ENCODE measurements at regions of chr3 and their contacts with region 1.

Region 1: GRCh38 chr3:123028233-123028828 is 768 bp upstream of the SEMA5B start:
- DNase-seq: peak; percentile 27
- H3K4me3 ChIP-seq: peak overlapping the region; percentile 52
- H3K27ac ChIP-seq: no peak overlapping the region
- H3K4me1 ChIP-seq: peaks cover 10% of the 10 kb centered on the region
- H3K27me3 ChIP-seq: peaks cover 42% of the 10 kb centered on the region
- CTCF ChIP-seq: peak; percentile 29

Region 2: DNA sequence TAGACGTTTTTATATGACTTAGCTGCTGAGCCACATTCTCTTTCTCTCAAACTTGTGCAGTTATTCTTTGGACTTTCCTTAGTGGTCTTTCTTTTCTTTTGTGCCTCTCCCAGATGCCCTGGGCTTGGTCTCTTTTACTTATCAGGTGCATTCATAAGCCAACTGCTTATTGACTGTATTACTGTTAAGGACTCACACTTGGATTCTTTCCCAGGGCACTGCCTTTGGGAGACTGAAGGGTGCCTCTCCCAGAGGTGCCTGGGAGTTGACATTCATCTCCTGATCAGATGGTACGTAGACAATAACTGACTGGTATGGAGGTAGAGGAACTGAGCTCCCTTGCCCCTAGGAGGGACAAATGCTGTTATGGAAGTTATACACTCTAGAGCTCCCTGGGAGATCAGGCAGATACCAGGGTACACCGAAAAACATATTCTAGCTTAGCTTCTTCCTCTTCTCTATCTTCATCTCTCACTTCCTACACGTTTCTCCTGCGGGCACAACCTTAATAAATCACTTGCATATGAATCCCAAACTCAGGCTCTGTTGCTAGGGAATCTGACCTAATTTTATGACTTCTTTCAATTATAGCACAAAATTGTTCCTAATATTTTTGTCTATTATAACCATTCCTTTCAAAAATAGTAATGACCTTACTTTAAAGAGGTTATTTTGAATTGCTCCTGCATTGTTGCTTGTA is 426.2 kb before region 1 on chr3:
- intact Hi-C with region 1: no loop called
- DNase-seq: no peak
- H3K4me3 ChIP-seq: no peak overlapping the region
- H3K27ac ChIP-seq: no peak overlapping the region
- H3K4me1 ChIP-seq: no peaks in the 10 kb centered on the region
- H3K27me3 ChIP-seq: no peaks in the 10 kb centered on the region
- CTCF ChIP-seq: no peak

Region 3: DNA sequence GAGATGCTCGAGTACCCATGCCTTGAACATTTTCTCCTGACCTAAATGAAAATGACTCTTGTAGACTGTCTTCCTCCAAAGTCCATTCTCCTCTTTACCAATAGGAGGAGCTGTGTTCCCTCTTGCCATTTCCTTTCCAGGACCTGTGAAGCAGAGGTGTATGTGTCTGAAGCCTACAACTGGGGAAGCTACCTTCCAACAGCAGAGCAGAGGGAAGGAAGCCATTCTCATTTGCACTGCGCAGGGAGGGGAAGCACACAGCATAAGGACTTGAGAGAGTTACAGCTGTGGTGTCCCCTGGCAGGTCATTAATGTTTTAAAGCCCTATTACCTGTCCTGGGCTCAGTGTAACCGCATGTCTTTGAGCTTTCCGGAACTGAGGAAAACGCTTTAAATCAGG is 273.4 kb before region 1 on chr3:
- intact Hi-C with region 1: loop called (anchors 10 kb)
- DNase-seq: peak; percentile 21
- H3K4me3 ChIP-seq: no peak overlapping the region
- H3K27ac ChIP-seq: no peak overlapping the region
- H3K4me1 ChIP-seq: no peaks in the 10 kb centered on the region
- H3K27me3 ChIP-seq: no peaks in the 10 kb centered on the region
- CTCF ChIP-seq: peak; percentile 77

Region 4: DNA sequence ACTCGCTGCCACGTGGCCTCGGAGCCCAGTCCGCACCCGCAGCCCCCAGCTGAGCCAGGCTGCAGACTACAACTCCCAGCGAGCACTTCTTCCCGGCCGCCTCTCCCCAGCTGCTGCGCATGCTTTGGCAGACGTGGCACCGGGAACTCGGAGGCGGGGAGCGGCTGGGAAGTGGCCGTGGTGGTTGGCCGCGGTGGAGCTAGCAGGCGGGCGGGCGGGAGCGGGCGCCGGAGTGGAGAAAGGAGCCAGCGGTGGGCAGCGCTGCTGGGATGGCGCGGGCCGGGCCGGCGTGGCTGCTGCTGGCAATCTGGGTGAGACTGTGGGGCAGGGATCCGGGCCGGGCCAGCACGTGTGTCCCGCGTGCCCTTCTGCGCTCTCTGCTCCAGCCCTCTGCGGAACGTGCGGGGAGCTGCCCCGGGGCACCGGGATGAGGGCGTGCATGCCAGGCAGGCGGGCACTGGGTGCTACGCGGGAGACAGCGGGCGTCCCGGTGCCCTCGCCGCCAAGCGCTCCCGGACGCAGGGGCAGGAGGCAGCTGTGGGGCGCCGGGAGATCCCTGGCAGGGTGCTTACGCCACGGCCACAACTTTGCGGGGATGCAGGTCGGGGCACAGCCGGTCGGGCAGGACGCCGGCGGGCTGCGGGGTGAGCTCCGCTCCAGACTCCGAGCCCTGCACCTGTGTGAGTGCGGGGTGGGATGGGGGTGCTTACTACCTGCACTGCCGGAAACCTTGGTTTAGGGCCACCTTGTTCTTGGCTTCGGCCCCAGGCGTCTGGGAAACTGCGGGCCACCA is 38.8 kb after region 1 on chr3 and contains the start of gene PDIA5:
- intact Hi-C with region 1: no loop called
- DNase-seq: peak; percentile 93
- H3K4me3 ChIP-seq: peak within 1 kb of the TSS; percentile 86
- H3K27ac ChIP-seq: peak within 1 kb of the TSS; percentile 62
- H3K4me1 ChIP-seq: peaks cover 4% of the 10 kb centered on the region
- H3K27me3 ChIP-seq: no peaks in the 10 kb centered on the region
- CTCF ChIP-seq: no peak
- total RNA-seq, gene PDIA5: 36.5 to 40.1 TPM

Region 5: DNA sequence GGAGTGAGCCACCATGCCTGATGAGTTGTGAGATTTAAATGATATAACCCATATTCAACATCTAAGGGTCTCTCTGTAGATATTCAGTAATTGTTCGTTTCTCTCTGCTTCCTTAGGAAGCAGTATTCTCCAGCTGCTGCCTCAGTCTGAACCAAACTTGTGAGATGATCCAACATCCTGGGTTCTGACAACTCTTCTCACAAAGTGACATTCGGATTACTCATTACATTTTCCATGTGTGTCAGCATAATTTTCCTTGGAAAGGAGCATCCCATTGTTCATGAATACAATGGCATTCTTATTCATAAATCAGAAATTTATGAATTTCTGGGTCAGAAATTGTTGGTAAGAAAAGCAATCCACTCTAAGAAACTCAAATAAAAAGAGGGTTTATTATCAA is 158.4 kb after region 1 on chr3:
- intact Hi-C with region 1: loop called (anchors 10 kb)
- DNase-seq: no peak
- H3K4me3 ChIP-seq: no peak overlapping the region
- H3K27ac ChIP-seq: no peak overlapping the region
- H3K4me1 ChIP-seq: no peaks in the 10 kb centered on the region
- H3K27me3 ChIP-seq: no peaks in the 10 kb centered on the region
- CTCF ChIP-seq: no peak

Region 6: DNA sequence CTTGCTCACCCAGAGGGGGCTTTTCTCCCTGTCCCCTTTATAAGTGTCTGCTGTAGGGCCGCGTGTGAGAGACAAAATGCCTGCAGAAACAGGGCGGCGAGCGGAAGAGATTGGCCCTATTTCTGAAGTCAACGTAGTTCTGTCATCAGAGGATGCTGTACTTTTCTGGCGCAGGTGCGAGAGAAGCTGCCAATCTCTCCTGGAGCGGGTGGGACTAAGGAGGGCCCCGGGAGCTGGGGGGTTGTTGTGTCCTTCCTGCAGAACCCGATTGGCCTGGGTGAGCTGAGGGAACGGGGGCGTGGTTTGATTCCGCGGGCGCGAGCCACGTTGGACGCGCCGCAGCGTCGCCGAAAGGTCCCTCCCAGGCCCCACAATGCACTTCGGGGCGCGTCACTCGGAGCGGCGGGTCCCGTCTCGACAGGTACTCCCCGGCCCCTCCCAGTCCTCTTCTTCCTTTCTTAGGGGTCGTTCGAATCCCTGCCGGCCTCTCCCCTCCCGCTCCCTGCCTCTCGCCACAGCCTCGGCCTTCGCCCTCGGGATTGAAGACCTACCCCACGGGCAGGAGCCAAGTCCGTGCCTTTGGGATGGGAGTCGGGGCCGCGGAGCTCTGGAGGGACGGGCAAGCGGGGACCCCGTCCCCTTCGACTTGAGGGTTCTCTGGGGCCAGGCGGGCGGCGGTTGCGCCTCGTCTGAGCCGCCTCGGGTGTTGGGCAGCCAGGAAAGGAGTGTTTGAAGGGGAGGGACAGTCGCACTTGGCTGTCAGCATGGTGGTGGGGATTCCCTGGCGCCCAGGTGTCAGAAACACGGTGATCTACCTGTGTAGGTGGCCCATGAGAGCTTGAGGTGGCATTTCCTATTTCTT is 173.5 kb after region 1 on chr3 and contains the start of gene SEC22A:
- intact Hi-C with region 1: no loop called
- DNase-seq: peak; percentile 97
- H3K4me3 ChIP-seq: peak within 1 kb of the TSS; percentile 71
- H3K27ac ChIP-seq: peak within 1 kb of the TSS; percentile 68
- H3K4me1 ChIP-seq: no peaks in the 10 kb centered on the region
- H3K27me3 ChIP-seq: no peaks in the 10 kb centered on the region
- CTCF ChIP-seq: no peak
- total RNA-seq, gene SEC22A: 15.6 to 18.7 TPM